Activated CD8-positive, alpha-beta T cell treated with anti-CD3 and anti-CD28 coated beads, Interleukin-2, amount 10 ng/mL, durations not matched to agents 7 days and 5 days (primary cell): ENCODE measurements at regions of chr7 and their contacts with region 1.

Region 1: GRCh38 chr7:47945261-47946001 is 2.8 kb downstream of the PKD1L1 start:
- DNase-seq: peak; percentile 84
- ATAC-seq: peak; percentile 65
- H3K4me3 Mint-ChIP-seq: no peak overlapping the region
- H3K27ac Mint-ChIP-seq: no peak overlapping the region
- H3K4me1 Mint-ChIP-seq: no peaks in the 10 kb centered on the region
- H3K27me3 Mint-ChIP-seq: no peaks in the 10 kb centered on the region

Region 2: GRCh38 chr7:47818796-47819606 is 126.4 kb before region 1 on chr7:
- CTCF ChIA-PET with region 1: no interaction called
- POLR2A ChIA-PET with region 1: no interaction called
- DNase-seq: peak; percentile 60
- ATAC-seq: no peak
- H3K4me3 Mint-ChIP-seq: no peak overlapping the region
- H3K27ac Mint-ChIP-seq: no peak overlapping the region
- H3K4me1 Mint-ChIP-seq: no peaks in the 10 kb centered on the region
- H3K27me3 Mint-ChIP-seq: peaks cover 4% of the 10 kb centered on the region

Region 3: GRCh38 chr7:47968847-47969774 is 23.7 kb after region 1 on chr7:
- CTCF ChIA-PET with region 1: interaction called, 34 read pairs
- POLR2A ChIA-PET with region 1: no interaction called
- DNase-seq: peak; percentile 67
- ATAC-seq: peak; percentile 75
- H3K4me3 Mint-ChIP-seq: no peak overlapping the region
- H3K27ac Mint-ChIP-seq: no peak overlapping the region
- H3K4me1 Mint-ChIP-seq: peaks cover 24% of the 10 kb centered on the region
- H3K27me3 Mint-ChIP-seq: no peaks in the 10 kb centered on the region

Region 4: GRCh38 chr7:48154792-48155413 is 209.5 kb after region 1 on chr7:
- CTCF ChIA-PET with region 1: interaction called, 26 read pairs
- POLR2A ChIA-PET with region 1: interaction called, 5 read pairs
- DNase-seq: peak; percentile 57
- ATAC-seq: peak; percentile 60
- H3K4me3 Mint-ChIP-seq: no peak overlapping the region
- H3K27ac Mint-ChIP-seq: no peak overlapping the region
- H3K4me1 Mint-ChIP-seq: no peaks in the 10 kb centered on the region
- H3K27me3 Mint-ChIP-seq: peaks cover 17% of the 10 kb centered on the region